ENCODE measurements at regions of chr14 and their contacts with region 1.

Region 1: DNA sequence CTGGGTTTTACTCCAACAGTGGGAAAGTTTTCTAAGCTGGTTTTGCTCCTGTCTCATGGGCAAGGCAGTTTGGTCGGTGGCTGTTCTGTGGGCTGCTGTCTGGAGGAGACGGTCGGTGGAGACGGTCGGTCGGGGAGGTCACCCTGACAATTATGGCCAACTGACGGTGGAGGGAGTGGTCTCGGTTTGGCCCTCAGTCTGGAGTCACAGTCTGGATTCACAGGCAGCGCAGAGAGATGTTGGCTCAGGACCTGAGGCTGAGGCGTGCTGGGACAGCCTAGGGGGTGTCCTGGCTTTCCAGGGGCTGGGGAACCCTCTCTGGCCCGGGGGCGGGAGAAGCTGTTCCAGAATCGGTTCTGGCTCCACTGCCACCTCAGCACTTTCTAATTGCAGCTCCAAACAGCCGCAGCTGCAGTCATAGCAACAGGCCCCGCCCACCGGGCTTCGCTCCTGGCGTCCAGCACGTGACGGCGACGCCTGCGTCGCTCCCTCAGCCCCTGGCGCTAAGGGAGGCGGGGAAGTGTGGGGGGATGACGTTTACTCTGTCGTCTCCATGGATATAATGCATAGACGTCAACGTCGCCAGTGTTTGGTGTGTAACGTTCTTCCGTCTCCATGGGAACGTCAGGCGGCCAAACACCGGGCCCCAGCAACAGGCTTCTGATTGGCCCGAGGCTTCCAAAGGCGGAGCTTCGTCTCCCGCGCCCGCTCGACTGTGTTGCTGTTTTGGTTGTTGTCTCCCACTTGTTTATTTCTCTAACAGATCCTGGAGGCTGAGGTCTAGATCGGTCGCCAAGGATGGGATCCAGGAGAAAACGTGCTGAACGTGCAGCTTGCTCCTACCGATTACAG is 19.8 kb upstream of the FOS start:
- DNase-seq: peak; percentile 95 to 100 (median 97)

Region 2: GRCh38 chr14:74852927-74853514 is 405.8 kb before region 1 on chr14:
- intact Hi-C with region 1: no loop called
- DNase-seq: no peak

Region 3: GRCh38 chr14:75176142-75176820 is 82.6 kb before region 1 on chr14 and contains the start of gene TMED10:
- intact Hi-C with region 1: loop called (anchors 2 kb)
- DNase-seq: peak; percentile 85 to 98 (median 90)

Region 4: DNA sequence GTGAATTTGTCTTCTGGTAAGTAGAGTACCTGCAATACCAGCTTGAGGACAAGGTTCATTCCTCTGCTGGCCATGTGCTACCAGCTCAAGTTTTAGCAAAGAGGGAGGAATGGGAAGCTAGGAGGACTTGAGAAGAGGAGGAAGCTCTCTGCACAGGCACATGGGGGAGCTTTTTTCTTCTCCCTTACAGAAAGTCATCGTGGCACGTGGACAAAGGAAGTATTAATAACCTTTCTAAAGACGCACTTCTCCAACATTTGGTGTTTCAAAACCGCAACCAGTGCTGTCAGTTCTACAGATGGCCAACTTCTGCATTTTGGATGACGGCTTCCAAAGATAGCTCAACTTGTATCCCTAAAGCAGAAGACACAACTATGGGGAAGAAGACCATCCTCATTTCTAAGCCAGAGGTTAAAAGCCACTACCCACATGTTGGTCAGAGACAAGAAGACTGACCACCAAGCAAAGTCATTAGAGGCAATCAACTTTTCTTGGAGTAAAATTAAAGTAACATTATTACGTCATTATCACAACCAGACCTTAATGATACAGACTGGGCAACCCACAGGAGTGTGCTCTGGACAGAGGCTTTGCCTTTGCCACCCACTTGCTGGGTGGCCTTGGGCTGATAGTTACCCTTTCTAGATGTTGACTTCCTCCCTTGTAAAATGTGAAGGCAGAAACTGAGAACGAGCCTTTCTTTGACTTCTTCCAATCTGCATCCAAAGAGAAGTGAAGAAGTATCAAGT is 70.1 kb before region 1 on chr14:
- intact Hi-C with region 1: no loop called
- DNase-seq: no peak

Region 5: DNA sequence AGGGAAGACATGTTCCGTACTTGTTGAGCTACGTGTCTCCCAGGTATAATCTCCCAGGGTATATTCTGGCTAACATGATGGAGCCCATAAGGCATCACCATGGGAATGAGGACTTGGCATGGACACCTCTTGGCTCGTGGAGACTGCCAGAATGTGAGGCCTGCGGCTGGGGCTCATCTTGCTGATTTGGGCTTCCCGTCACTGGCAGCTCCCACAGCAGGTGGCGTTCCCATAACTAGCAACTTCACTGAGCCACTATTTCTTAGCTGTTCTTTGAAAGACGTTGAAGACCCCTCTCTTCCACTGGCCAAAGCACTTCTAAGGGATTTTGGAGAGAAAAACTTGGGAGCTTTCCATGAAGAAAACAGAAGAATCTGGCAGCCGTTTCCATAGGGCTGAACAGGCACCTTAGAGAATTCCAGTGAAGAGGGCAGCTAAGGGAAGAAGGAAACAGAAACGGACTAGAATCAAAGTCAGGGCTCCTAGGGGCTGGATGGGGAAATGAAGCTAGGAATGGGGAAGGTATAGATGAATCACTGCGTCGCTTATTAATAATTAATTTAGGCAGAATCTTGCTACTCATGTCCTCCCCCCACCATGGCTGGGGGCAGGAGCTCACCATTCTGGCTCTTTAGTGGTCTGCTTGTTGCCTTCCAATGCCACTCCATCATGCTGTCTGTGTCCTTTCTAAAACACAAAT is 19.9 kb before region 1 on chr14:
- intact Hi-C with region 1: loop called (anchors 2 kb)
- DNase-seq: peak in 6 of 10 donors; percentile 24 to 89 (median 64)

Region 6: GRCh38 chr14:75278422-75279161 is 19.8 kb after region 1 on chr14 and contains the start of gene FOS:
- intact Hi-C with region 1: loop called (anchors 2 kb)
- DNase-seq: peak; percentile 85 to 99 (median 90)